GM13977 (cell line): ENCODE measurements at regions of chr17 and their contacts with region 1.

Region 1: GRCh38 chr17:20121359-20122253 is 112.4 kb downstream of the SPECC1 start:
- DNase-seq: peak; percentile 77
- CTCF ChIP-seq: peak; percentile 87

Region 2: DNA sequence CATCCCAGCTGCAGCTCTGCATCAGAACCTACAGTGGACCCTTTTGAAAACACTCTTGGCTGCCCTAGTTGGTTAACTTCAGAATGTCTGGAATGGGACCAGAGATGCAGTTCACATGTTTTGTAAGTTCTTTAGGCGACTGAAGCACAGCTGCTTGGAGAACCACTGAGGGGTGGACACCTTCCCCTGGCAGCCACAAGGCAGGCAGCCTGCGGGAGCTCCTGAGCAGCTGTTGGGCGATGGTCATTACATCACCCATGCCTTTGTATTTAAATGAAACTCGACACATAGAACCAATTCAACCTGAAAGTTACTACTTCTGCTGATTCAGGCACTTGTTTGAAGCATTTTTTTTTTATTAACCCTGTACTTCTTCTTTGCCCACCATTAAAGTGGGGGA is 194.2 kb after region 1 on chr17:
- in situ Hi-C with region 1: loop called (anchors 10 kb)
- DNase-seq: no peak
- CTCF ChIP-seq: no peak